CD4-positive, alpha-beta memory T cell (primary cell): ENCODE measurements at regions of chr6 and their contacts with region 1.

Region 1: DNA sequence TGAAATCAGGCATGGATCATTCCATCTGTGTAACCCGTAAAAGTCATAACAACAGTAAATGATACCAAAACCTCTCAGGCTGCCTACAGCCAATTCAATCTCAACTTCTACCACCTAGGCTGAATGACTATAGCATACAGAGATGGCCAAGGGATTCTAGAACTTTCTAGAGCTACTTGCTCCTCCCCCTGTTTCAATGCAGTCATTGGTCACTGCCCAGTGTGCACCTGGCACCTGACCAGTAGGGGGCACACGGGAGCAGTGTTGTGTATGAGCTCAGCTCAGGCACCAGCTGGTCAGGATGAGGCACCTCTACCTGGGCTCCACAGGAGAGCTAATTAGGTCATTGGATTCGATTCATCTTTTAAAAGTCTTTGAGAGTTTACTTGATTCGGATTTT is 86.2 kb downstream of the PLEKHG1 start:
- DNase-seq: peak in 3 of 5 donors; percentile 10 to 21 (median 10)
- H3K4me3 ChIP-seq: no peak overlapping the region
- H3K4me3 Mint-ChIP-seq: no peak overlapping the region
- H3K27ac ChIP-seq: no peak overlapping the region
- H3K27ac Mint-ChIP-seq: no peak overlapping the region
- H3K4me1 ChIP-seq: no peaks in the 10 kb centered on the region
- H3K4me1 Mint-ChIP-seq: no peaks in the 10 kb centered on the region
- H3K27me3 ChIP-seq: no peaks in the 10 kb centered on the region
- H3K27me3 Mint-ChIP-seq: no peaks in the 10 kb centered on the region

Region 2: GRCh38 chr6:150622941-150623874 is 62.7 kb before region 1 on chr6:
- CTCF ChIA-PET with region 1: no interaction called
- POLR2A ChIA-PET with region 1: no interaction called
- intact Hi-C with region 1: no loop called
- DNase-seq: peak; percentile 25 to 50 (median 35)
- H3K4me3 ChIP-seq: no peak overlapping the region
- H3K4me3 Mint-ChIP-seq: peak overlapping the region in 5 of 8 donors; percentile 32 to 60 (median 44)
- H3K27ac ChIP-seq: no peak overlapping the region
- H3K27ac Mint-ChIP-seq: peak overlapping the region; percentile 1 to 90 (median 75)
- H3K4me1 ChIP-seq: peaks cover 17% of the 10 kb centered on the region
- H3K4me1 Mint-ChIP-seq: peaks cover 7 to 18% (median 11%) of the 10 kb centered on the region in 4 donors
- H3K27me3 ChIP-seq: no peaks in the 10 kb centered on the region
- H3K27me3 Mint-ChIP-seq: peaks cover 3 to 5% of the 10 kb centered on the region in 2 donors

Region 3: GRCh38 chr6:150696190-150696589 is 10.3 kb after region 1 on chr6:
- CTCF ChIA-PET with region 1: interaction called, 11 read pairs
- POLR2A ChIA-PET with region 1: no interaction called
- intact Hi-C with region 1: no loop called
- DNase-seq: no peak
- H3K4me3 ChIP-seq: no peak overlapping the region
- H3K4me3 Mint-ChIP-seq: no peak overlapping the region
- H3K27ac ChIP-seq: no peak overlapping the region
- H3K27ac Mint-ChIP-seq: no peak overlapping the region
- H3K4me1 ChIP-seq: no peaks in the 10 kb centered on the region
- H3K4me1 Mint-ChIP-seq: no peaks in the 10 kb centered on the region
- H3K27me3 ChIP-seq: no peaks in the 10 kb centered on the region
- H3K27me3 Mint-ChIP-seq: no peaks in the 10 kb centered on the region